Motor neuron (in vitro differentiated cells): ENCODE measurements at regions of chr11 and their contacts with region 1.

Region 1: DNA sequence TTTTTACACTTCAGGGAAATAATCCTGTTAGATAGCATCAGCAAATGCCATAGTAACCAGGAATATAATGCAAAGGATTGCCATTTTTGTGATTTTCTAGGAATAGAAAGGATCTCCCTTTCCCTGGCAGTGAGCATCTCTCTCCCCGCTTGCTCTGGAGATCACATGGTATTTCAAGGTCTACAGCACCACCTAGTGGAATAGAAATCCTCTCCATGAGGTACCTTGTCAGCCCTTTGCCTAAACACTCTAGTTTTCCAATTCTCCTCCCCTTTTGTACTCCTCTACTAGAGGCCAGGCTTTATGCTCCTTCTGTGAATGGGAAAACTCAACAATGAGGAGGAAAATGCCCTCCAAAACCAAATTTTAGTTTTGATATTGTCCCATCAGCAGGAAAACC is 78.4 kb downstream of the XRRA1 start:
- ATAC-seq: peak in 3 of 8 experiments; percentile 68 to 99 (median 86)
- H3K4me3 ChIP-seq: no peak overlapping the region
- H3K27ac ChIP-seq: no peak overlapping the region
- H3K4me1 ChIP-seq: no peaks in the 10 kb centered on the region

Region 2: DNA sequence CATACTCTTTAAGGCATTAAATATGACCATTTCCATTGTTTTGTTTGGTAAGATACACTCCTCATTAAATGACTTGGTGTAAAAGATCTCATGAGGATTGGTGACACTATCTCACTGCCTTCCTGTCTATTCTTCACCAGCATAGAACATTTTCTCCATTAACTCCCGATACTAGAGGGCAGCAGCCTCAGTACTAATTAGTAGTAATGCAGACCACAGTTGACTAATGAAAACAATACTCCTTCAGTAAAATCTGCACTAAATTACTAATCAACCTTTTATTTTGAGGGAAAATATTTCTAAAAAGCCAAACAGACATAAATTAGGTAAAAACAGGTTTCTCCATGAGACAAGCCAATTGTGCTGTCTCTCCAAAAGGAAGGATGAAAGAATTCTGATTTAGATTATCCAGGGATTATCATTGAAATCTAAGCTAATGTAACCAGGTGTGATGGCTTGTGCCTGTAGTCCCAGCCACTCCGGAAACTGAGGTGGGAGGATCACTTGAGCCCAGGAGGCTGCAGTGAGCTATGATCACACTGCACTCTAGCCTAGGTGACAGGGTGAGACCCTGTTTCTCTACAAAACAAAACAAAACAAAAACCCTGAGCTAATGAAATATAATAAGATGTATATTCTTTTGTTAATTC is 481.7 kb before region 1 on chr11:
- in situ Hi-C with region 1: no loop called
- ATAC-seq: peak; percentile 71 to 89 (median 82)
- H3K4me3 ChIP-seq: no peak overlapping the region
- H3K27ac ChIP-seq: no peak overlapping the region
- H3K4me1 ChIP-seq: peaks cover 0 to 6% of the 10 kb centered on the region in 2 donors

Region 3: DNA sequence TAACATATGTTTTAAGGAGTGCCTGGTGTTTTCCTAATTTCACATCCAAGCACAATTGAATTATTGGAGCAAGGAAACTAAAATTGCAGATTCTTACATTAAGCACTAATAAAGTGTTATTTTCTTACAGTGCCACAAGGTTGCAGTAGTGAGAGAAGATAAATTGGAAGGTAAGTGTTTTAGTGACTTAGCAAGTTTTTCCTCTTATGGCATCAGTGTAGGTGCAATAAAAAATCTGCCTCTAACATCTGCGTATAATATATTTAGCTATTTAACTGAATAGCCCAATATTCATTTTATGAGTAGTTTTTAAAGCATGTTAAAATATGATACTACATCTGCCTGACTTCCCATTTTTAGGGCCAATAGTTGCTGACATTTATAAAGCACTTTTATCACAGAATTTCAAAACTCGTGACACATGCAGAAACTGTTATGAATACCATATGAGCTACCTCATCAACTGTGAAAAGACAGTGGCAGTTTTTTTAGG is 259.1 kb before region 1 on chr11:
- in situ Hi-C with region 1: loop called in 1 of 9 experiments (anchors 25 kb)
- ATAC-seq: peak in 2 of 8 experiments; percentile 76 to 82
- H3K4me3 ChIP-seq: no peak overlapping the region
- H3K27ac ChIP-seq: no peak overlapping the region
- H3K4me1 ChIP-seq: no peaks in the 10 kb centered on the region